IMR-90 (cell line): ENCODE measurements at regions of chr2 and their contacts with region 1.

Region 1: DNA sequence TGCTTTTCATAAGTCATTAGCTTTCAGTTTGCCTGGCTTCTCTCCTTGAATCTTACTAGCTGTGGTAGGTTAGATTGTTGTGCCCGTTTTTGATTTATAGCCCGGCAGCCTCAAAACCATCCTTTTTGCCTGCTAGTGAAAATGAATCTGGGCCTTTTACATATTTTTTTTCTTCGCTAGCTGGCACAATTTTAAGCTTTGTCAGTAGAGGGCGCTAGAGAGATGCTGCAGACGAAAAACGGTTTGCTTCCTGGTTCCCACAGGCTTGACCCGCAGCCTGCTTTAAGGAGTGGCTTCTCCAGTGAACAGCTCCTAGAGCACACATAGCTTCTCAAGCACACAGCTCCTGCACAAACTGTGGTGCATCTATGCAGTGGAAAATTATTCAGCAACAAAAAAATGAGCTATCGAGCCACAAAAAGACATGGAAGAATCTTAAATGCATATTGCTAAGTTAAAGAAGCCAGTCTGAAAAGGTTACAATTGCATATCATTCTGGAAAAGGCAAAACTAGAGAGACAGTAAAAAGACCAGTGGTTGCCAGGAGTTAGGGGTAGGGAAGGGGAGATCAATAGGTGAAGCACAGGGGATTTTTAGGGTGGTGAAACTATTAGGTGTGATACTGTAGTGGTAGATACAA is 47.9 kb downstream of the E2F6 start:
- DNase-seq: no peak
- ATAC-seq: no peak
- H3K4me3 ChIP-seq: no peak overlapping the region
- H3K27ac ChIP-seq: no peak overlapping the region
- H3K4me1 ChIP-seq: no peaks in the 10 kb centered on the region
- H3K27me3 ChIP-seq: no peaks in the 10 kb centered on the region
- CTCF ChIP-seq: peak; percentile 25
- POLR2A ChIP-seq: no peak
- RAD21 ChIP-seq: no peak

Region 2: DNA sequence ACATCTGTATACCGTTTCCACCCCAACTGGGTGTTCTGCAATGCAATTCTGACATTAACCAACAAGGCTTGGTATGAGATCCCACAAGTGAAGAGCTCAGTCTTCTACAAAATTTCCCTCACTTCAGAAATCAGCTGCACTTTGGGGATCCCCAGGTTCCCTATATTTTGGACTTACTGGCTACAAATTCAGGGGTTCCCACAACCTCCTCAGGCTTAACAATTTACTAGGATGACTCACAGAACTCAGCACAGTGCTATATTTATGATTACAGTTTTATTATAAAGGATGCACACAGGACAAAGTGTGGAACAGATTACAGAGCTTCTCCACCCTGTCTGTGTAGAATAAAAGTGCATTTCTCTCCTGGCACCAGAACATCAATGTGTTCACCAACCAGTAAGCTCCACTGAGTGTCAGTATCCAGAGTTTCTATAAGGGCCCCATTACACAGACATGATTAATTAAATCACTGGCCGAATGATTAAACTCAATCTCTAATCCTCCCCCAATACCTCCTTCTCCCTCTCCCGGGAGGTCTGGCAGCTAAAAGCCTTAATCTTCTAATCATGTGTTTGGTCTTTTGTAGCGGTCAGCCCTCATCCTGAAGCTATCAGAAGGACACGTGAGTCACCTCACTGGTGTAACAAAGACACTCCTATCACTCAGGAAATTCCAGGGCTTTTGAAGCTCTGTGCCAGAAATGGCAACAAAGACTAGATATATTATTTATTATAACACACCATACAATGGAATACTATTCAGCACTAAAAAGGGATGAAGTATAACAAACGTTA is 178.2 kb before region 1 on chr2:
- CTCF ChIA-PET with region 1: interaction called, 3 read pairs
- POLR2A ChIA-PET with region 1: no interaction called
- dilution Hi-C with region 1: no loop called
- in situ Hi-C with region 1: loop called (anchors 5 kb)
- intact Hi-C with region 1: no loop called
- DNase-seq: peak; percentile 25
- ATAC-seq: peak; percentile 56; the same call in 1 of the 2 replicates
- H3K4me3 ChIP-seq: no peak overlapping the region
- H3K27ac ChIP-seq: no peak overlapping the region
- H3K4me1 ChIP-seq: peaks cover 3% of the 10 kb centered on the region; the same call in 1 of the 2 replicates
- H3K27me3 ChIP-seq: no peaks in the 10 kb centered on the region
- CTCF ChIP-seq: no peak
- POLR2A ChIP-seq: no peak
- RAD21 ChIP-seq: no peak

Region 3: GRCh38 chr2:11254100-11254536 is 163.9 kb before region 1 on chr2:
- CTCF ChIA-PET with region 1: no interaction called
- POLR2A ChIA-PET with region 1: no interaction called
- dilution Hi-C with region 1: no loop called
- in situ Hi-C with region 1: no loop called
- intact Hi-C with region 1: no loop called
- DNase-seq: peak; percentile 28
- ATAC-seq: peak; percentile 63
- H3K4me3 ChIP-seq: no peak overlapping the region
- H3K27ac ChIP-seq: peak overlapping the region; percentile 2; the same call in 1 of the 2 replicates
- H3K4me1 ChIP-seq: peaks cover 7% of the 10 kb centered on the region
- H3K27me3 ChIP-seq: no peaks in the 10 kb centered on the region
- CTCF ChIP-seq: no peak
- POLR2A ChIP-seq: no peak
- RAD21 ChIP-seq: no peak

Region 4: GRCh38 chr2:11389551-11390528 is 28.2 kb before region 1 on chr2:
- CTCF ChIA-PET with region 1: no interaction called
- POLR2A ChIA-PET with region 1: no interaction called
- dilution Hi-C with region 1: no loop called
- in situ Hi-C with region 1: no loop called
- intact Hi-C with region 1: no loop called
- DNase-seq: peak; percentile 97
- ATAC-seq: peak; percentile 59
- H3K4me3 ChIP-seq: no peak overlapping the region
- H3K27ac ChIP-seq: peak overlapping the region; percentile 6; the same call in 1 of the 2 replicates
- H3K4me1 ChIP-seq: peaks cover 37% of the 10 kb centered on the region
- H3K27me3 ChIP-seq: no peaks in the 10 kb centered on the region
- CTCF ChIP-seq: no peak
- POLR2A ChIP-seq: no peak
- RAD21 ChIP-seq: no peak